B cell (primary cell): ENCODE measurements at regions of chr1 and their contacts with region 1.

Region 1: GRCh38 chr1:32817159-32817814 is at the starts of genes S100PBP and YARS1:
- DNase-seq: peak; percentile 98
- ATAC-seq: peak; percentile 95
- H3K4me3 ChIP-seq: peak within 1 kb of the TSS; percentile 65 to 97 (median 95)
- H3K4me3 Mint-ChIP-seq: peak within 1 kb of the TSS; percentile 98
- H3K27ac ChIP-seq: peak within 1 kb of the TSS; percentile 78 to 88
- H3K27ac Mint-ChIP-seq: peak within 1 kb of the TSS; percentile 99
- H3K4me1 ChIP-seq: peaks cover 36 to 57% of the 10 kb centered on the region in 2 donors
- H3K4me1 Mint-ChIP-seq: peaks cover 55% of the 10 kb centered on the region
- H3K27me3 ChIP-seq: no peaks in the 10 kb centered on the region
- H3K27me3 Mint-ChIP-seq: no peaks in the 10 kb centered on the region
- CTCF ChIP-seq: no peak
- total RNA-seq, gene S100PBP: 94.1 and 105 TPM in 2 replicates
- total RNA-seq, gene YARS1: 70.7 and 73.2 TPM in 2 replicates

Region 2: GRCh38 chr1:31644560-31645273 is 1172.6 kb before region 1 on chr1 and contains the start of gene PEF1:
- CTCF ChIA-PET with region 1: no interaction called
- POLR2A ChIA-PET with region 1: no interaction called
- intact Hi-C with region 1: loop called (anchors 10 kb)
- DNase-seq: peak; percentile 100
- ATAC-seq: peak; percentile 93
- H3K4me3 ChIP-seq: peak within 1 kb of the TSS; percentile 70 to 98 (median 95)
- H3K4me3 Mint-ChIP-seq: peak within 1 kb of the TSS; percentile 98
- H3K27ac ChIP-seq: peak within 1 kb of the TSS; percentile 98 to 99
- H3K27ac Mint-ChIP-seq: peak within 1 kb of the TSS; percentile 99
- H3K4me1 ChIP-seq: peaks cover 17 to 19% of the 10 kb centered on the region in 2 donors
- H3K4me1 Mint-ChIP-seq: peaks cover 31% of the 10 kb centered on the region
- H3K27me3 ChIP-seq: no peaks in the 10 kb centered on the region
- H3K27me3 Mint-ChIP-seq: no peaks in the 10 kb centered on the region
- CTCF ChIP-seq: no peak
- total RNA-seq, gene PEF1: 36.7 and 46.9 TPM in 2 replicates

Region 3: GRCh38 chr1:32394141-32394889 is 423.0 kb before region 1 on chr1 and contains the start of gene BSDC1:
- CTCF ChIA-PET with region 1: no interaction called
- POLR2A ChIA-PET with region 1: no interaction called
- intact Hi-C with region 1: loop called (anchors 2 kb)
- DNase-seq: peak; percentile 99
- ATAC-seq: peak; percentile 99
- H3K4me3 ChIP-seq: peak within 1 kb of the TSS; percentile 66 to 94 (median 84)
- H3K4me3 Mint-ChIP-seq: peak within 1 kb of the TSS; percentile 99
- H3K27ac ChIP-seq: peak within 1 kb of the TSS; percentile 91
- H3K27ac Mint-ChIP-seq: peak within 1 kb of the TSS; percentile 99
- H3K4me1 ChIP-seq: peaks cover 14 to 27% of the 10 kb centered on the region in 2 donors
- H3K4me1 Mint-ChIP-seq: peaks cover 31% of the 10 kb centered on the region
- H3K27me3 ChIP-seq: no peaks in the 10 kb centered on the region
- H3K27me3 Mint-ChIP-seq: peaks cover 3% of the 10 kb centered on the region
- CTCF ChIP-seq: no peak
- total RNA-seq, gene BSDC1: 117 and 124 TPM in 2 replicates

Region 4: DNA sequence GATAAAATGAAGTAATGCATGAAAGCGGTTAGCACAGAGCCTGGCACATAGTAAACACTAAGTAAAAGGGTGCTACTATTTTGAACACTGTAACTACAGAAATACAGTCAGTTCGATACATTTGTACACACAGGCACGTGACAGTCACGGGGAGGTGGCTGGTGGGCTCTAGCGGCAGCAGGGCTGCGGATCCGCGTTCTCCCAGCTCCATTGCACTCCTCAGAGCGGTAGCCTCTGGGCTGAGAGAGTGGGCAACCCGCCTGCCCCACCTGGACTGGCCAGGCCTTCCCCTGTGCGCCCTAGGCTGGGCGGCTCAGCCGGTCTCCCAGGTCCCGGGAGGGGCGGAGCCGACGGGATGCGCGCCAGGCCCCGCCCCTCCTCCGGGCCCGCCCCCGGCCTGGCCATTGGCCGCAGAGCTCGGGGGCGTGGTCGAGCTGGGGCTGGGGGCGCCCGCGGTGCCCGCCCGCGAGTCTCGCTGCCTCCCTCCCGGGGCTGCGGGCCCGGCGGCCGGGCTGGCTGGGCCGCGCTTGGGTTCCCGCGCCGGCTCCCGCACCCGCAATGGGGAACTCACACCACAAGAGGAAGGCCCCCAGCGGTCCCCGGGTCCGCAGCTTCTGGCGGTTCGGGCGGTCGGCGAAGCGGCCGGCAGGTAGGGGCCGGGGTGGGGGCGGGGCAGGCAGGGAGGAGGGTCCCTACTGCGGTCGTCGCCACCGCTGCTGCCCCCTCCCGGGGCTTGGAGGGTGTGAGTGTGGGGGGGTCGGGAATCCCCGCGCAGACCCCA is 63.6 kb before region 1 on chr1:
- CTCF ChIA-PET with region 1: no interaction called
- POLR2A ChIA-PET with region 1: no interaction called
- intact Hi-C with region 1: loop called (anchors 5 kb)
- DNase-seq: peak; percentile 83
- ATAC-seq: peak; percentile 94
- H3K4me3 ChIP-seq: peak overlapping the region; percentile 31 to 61 (median 48)
- H3K4me3 Mint-ChIP-seq: peak overlapping the region; percentile 86
- H3K27ac ChIP-seq: no peak overlapping the region
- H3K27ac Mint-ChIP-seq: peak overlapping the region; percentile 51
- H3K4me1 ChIP-seq: peaks cover 11 to 15% of the 10 kb centered on the region in 2 donors
- H3K4me1 Mint-ChIP-seq: peaks cover 11% of the 10 kb centered on the region
- H3K27me3 ChIP-seq: peaks cover 0 to 36% (median 4%) of the 10 kb centered on the region in 4 experiments
- H3K27me3 Mint-ChIP-seq: peaks cover 22% of the 10 kb centered on the region
- CTCF ChIP-seq: no peak

Region 5: DNA sequence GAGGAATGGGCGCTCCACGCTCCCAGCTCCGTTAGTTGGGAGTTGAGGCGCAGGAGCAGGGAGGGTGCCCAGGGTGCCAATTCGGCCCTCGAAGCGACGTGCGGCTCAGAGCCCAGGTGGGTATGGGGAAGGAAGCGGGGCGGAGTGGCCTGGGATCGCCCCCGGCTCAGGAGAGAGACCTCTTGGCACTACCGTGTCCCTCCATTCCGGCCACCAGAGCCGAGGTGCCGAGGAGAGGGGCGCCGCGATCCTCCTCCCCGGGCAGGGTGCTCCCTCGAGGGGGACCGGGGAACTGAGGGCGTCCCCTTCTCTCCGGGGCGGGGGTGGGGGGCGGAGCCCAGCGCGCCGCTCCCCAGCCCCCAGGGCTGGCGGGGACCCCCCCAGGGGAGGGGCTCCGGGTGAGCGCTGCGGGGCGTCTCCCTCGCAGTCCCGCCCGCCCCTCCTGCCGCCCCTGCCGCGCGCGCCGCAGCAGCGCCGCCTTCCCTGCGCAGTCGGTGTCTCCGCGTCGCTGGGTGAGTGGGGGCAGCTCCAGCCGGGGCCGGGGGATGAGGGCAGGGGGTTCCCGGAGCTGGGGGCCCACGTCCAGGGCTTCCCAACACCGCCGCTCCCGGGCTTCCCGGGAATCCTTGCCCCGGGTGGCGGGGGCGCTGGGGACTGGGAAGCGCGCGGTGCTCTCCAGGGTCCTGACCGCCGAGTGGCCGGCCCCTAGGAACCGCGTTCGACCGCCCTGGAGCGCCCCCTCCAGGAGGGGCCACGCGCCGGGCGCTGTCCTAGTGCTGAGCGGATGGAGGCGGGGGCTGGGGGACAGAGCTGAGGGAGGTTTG is 68.9 kb after region 1 on chr1 and contains the start of gene HPCA:
- CTCF ChIA-PET with region 1: no interaction called
- POLR2A ChIA-PET with region 1: no interaction called
- intact Hi-C with region 1: no loop called
- DNase-seq: peak; percentile 46
- ATAC-seq: peak; percentile 39
- H3K4me3 ChIP-seq: no peak within 1 kb of the TSS
- H3K4me3 Mint-ChIP-seq: peak within 1 kb of the TSS; percentile 33
- H3K27ac ChIP-seq: no peak within 1 kb of the TSS
- H3K27ac Mint-ChIP-seq: no peak within 1 kb of the TSS
- H3K4me1 ChIP-seq: peaks cover 3 to 6% of the 10 kb centered on the region in 2 donors
- H3K4me1 Mint-ChIP-seq: peaks cover 10% of the 10 kb centered on the region
- H3K27me3 ChIP-seq: peaks cover 0 to 68% (median 26%) of the 10 kb centered on the region in 4 experiments
- H3K27me3 Mint-ChIP-seq: peaks cover 61% of the 10 kb centered on the region
- CTCF ChIP-seq: peak; percentile 31
- total RNA-seq, gene HPCA: not detected in 2 replicates

Region 6: GRCh38 chr1:33036526-33037503 is 219.5 kb after region 1 on chr1 and contains the start of gene AK2:
- CTCF ChIA-PET with region 1: no interaction called
- POLR2A ChIA-PET with region 1: no interaction called
- intact Hi-C with region 1: loop called (anchors 1 kb)
- DNase-seq: peak; percentile 94
- ATAC-seq: peak; percentile 99
- H3K4me3 ChIP-seq: peak within 1 kb of the TSS; percentile 72 to 99 (median 77)
- H3K4me3 Mint-ChIP-seq: peak within 1 kb of the TSS; percentile 97
- H3K27ac ChIP-seq: peak within 1 kb of the TSS; percentile 42 to 78
- H3K27ac Mint-ChIP-seq: peak within 1 kb of the TSS; percentile 91
- H3K4me1 ChIP-seq: peaks cover 16 to 24% of the 10 kb centered on the region in 2 donors
- H3K4me1 Mint-ChIP-seq: peaks cover 45% of the 10 kb centered on the region
- H3K27me3 ChIP-seq: no peaks in the 10 kb centered on the region
- H3K27me3 Mint-ChIP-seq: no peaks in the 10 kb centered on the region
- CTCF ChIP-seq: no peak
- total RNA-seq, gene AK2: 104 and 109 TPM in 2 replicates

Region 7: GRCh38 chr1:33181921-33182341 is 364.6 kb after region 1 on chr1 and contains the start of gene TRIM62:
- CTCF ChIA-PET with region 1: no interaction called
- POLR2A ChIA-PET with region 1: no interaction called
- intact Hi-C with region 1: loop called (anchors 2 kb)
- DNase-seq: peak; percentile 88
- ATAC-seq: peak; percentile 72
- H3K4me3 ChIP-seq: peak within 1 kb of the TSS; percentile 31 to 86 (median 75)
- H3K4me3 Mint-ChIP-seq: peak within 1 kb of the TSS; percentile 97
- H3K27ac ChIP-seq: peak within 1 kb of the TSS in 1 of 2 donors; percentile 31
- H3K27ac Mint-ChIP-seq: peak within 1 kb of the TSS; percentile 85
- H3K4me1 ChIP-seq: peaks cover 12 to 17% of the 10 kb centered on the region in 2 donors
- H3K4me1 Mint-ChIP-seq: peaks cover 17% of the 10 kb centered on the region
- H3K27me3 ChIP-seq: peaks cover 0 to 14% (median 8%) of the 10 kb centered on the region in 4 experiments
- H3K27me3 Mint-ChIP-seq: peaks cover 28% of the 10 kb centered on the region
- CTCF ChIP-seq: no peak
- total RNA-seq, gene TRIM62: 15.7 and 24.1 TPM in 2 replicates